Ovary (tissue), 10 donors: ENCODE measurements at regions of chr11 and their contacts with region 1.

Region 1: DNA sequence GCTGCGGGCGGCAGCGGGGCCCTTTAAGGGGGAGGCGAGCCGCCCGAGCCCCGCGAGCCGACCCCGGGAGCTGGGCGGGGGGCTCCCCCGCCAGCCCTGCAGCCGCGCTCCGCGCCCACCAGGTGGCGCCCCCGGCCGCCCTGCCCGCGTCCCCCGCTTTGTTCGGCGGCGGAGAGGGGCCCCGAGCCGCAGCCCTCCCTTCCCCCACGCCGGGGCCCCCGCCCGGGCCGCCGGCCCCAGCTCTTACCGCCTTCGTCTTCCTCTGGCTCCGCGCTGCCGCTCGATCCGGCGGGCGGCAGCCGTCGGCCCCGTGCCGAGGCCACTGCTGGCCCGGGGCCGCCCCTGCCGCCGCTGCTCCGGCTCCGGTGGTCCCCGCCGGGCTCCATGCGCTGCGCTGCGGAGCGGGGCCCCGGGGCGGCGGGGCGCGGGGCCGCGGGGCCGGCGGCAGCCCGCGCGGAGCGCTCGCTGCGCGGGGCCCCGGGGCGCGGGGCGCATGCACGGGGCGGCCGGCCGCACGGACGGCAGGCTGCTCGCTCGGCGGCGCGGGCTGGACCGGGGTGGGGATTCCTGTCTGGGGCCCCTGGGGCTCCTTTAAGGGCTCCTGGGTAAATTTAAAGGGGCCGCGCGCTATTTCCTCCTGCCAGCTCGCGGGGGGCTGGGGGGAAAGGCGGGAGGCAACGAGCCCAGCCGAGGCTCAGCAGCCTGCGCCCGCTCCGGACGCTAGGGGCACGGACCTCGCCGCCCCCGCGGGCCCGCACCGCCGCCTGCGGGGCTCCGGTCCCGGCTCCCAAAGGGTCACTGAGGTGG is at the start of gene ZFTA:
- DNase-seq: peak; percentile 67 to 86 (median 80)
- H3K4me3 ChIP-seq: peak within 1 kb of the TSS; percentile 78
- H3K27ac ChIP-seq: peak within 1 kb of the TSS; percentile 80 to 89
- H3K4me1 ChIP-seq: peaks cover 19% of the 10 kb centered on the region
- H3K27me3 ChIP-seq: no peaks in the 10 kb centered on the region
- CTCF ChIP-seq: peak in 2 of 3 donors; percentile 88 to 90
- EP300 ChIP-seq: no peak
- POLR2A ChIP-seq: no peak
- total RNA-seq, gene ZFTA: 22.6 to 64.4 (median 51.4) TPM

Region 2: GRCh38 chr11:62880803-62881578 is 887.4 kb before region 1 on chr11 and contains the start of gene SLC3A2:
- intact Hi-C with region 1: loop called in 1 of 4 experiments (anchors 10 kb)
- DNase-seq: peak; percentile 89 to 91 (median 90)
- H3K4me3 ChIP-seq: peak within 1 kb of the TSS; percentile 74
- H3K27ac ChIP-seq: peak within 1 kb of the TSS; percentile 96 to 99
- H3K4me1 ChIP-seq: peaks cover 14% of the 10 kb centered on the region
- H3K27me3 ChIP-seq: no peaks in the 10 kb centered on the region
- CTCF ChIP-seq: peak; percentile 50 to 75 (median 74)
- EP300 ChIP-seq: no peak
- POLR2A ChIP-seq: peak; percentile 99
- total RNA-seq, gene SLC3A2: 69.0 to 430 (median 97.7) TPM

Region 3: DNA sequence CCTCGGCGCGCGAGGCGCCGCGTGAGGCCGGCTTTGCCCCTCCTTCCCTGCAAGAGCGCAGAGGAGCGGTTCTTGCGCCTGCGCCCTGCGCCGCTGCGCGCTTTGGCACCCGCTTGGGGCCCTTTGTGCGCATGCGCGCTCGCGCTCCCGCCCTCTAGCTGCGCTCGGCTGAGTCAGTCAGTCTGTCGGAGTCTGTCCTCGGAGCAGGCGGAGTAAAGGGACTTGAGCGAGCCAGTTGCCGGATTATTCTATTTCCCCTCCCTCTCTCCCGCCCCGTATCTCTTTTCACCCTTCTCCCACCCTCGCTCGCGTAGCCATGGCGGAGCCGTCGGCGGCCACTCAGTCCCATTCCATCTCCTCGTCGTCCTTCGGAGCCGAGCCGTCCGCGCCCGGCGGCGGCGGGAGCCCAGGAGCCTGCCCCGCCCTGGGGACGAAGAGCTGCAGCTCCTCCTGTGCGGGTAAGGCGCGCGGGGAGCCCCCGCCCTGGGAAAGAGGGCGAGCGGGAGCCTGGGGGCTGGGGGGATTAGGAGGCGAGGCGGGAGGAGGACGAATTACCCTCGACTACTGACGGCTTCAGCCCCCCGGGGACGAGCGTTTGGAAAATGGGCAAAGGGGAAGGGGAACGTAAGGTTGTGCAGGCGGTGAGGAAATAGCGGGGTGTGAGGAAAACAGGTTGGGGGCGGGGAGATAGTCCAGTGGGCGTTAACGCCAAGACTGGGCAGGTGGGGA is 87.0 kb before region 1 on chr11 and contains the start of gene RTN3:
- intact Hi-C with region 1: loop called in 1 of 4 experiments (anchors 10 kb)
- DNase-seq: peak; percentile 95 to 99 (median 96)
- H3K4me3 ChIP-seq: peak within 1 kb of the TSS; percentile 97
- H3K27ac ChIP-seq: peak within 1 kb of the TSS; percentile 76 to 87
- H3K4me1 ChIP-seq: no peaks in the 10 kb centered on the region
- H3K27me3 ChIP-seq: no peaks in the 10 kb centered on the region
- CTCF ChIP-seq: peak in 2 of 3 donors; percentile 31 to 39
- EP300 ChIP-seq: no peak
- POLR2A ChIP-seq: peak; percentile 92
- total RNA-seq, gene RTN3: 53.2 to 82.9 (median 64.1) TPM

Region 4: DNA sequence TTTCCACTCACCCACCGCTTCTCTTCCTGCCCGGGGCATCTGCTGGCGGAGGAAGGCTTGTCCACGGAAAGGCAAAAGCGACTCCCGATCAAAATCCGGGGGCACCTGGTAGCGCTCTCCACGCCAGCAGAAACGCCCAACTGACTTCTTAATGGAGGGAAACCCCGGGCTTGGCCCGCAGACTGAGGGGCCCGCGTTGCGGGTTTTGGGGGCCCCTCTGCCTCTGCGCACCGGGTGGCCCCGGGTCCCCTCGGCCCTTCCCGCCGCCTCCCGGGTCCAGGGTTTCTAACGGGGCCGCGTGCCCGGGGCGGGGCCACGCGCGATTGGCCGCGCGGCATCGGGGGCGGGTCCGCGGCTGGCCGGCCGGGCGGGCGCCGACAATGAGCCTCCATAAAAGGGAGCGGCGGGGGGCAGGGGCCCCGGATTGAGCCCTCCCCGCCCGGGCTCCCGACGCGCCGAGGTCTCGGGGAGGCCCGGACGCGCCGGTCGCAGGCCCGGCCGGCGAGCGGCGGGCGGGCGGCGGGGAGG is 44.7 kb after region 1 on chr11 and contains the start of gene SPINDOC:
- intact Hi-C with region 1: loop called in 2 of 4 experiments (anchors 2 to 5 kb)
- DNase-seq: peak; percentile 72 to 85 (median 79)
- H3K4me3 ChIP-seq: peak within 1 kb of the TSS; percentile 90
- H3K27ac ChIP-seq: peak within 1 kb of the TSS; percentile 49 to 64
- H3K4me1 ChIP-seq: peaks cover 9% of the 10 kb centered on the region
- H3K27me3 ChIP-seq: no peaks in the 10 kb centered on the region
- CTCF ChIP-seq: no peak
- EP300 ChIP-seq: no peak
- POLR2A ChIP-seq: no peak
- total RNA-seq, gene SPINDOC: 10.2 to 22.7 (median 19.5) TPM

Region 5: DNA sequence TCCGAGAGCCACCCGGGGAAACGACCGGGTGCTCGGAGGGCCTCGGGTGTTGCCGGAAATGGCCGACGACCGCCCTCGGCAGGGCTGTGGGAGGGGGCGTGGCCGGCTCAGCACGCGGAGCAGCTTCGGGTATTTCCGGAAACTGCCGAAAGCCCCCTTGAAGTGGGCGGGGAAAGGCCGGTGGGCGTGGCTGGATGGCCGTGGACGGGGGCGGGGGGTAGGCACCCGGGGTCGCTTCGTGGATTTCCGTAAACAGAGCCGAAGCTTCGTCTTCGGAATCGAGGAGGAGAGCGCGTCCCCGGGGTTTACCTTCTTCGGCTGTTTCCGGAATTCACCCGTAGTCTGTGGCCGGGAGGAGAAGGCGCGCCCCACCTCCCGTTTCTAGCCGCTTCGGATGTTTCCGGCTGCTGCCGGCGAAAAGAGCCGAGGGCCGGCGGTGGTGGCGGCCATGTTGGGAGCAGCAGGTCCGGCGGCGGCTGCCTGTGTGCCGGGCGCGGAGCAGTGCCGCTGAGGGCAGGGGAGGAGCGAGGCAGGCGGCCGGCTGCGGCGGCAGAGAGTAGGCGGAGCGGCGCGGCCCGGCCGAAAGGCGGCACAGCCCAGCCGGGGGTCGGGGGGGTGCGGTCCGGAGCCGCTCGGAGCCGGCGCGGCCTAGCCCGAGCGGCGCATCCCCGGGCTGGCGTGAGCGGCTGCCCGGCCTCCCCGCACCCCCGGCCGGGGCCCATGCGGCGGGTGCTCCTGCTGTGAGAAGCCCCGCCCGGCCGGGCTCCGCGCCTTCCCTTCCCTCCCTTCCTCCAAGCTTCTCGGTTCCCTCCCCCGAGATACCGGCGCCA is 70.5 kb after region 1 on chr11 and contains the start of gene MARK2:
- intact Hi-C with region 1: loop called in 1 of 4 experiments (anchors 2 kb)
- DNase-seq: peak; percentile 99 to 100 (median 100)
- H3K4me3 ChIP-seq: peak within 1 kb of the TSS; percentile 80
- H3K27ac ChIP-seq: peak within 1 kb of the TSS; percentile 84 to 93
- H3K4me1 ChIP-seq: peaks cover 11% of the 10 kb centered on the region
- H3K27me3 ChIP-seq: no peaks in the 10 kb centered on the region
- CTCF ChIP-seq: peak in 1 of 3 donors; percentile 17
- EP300 ChIP-seq: no peak
- POLR2A ChIP-seq: peak; percentile 73
- total RNA-seq, gene MARK2: 13.5 to 27.8 (median 25.8) TPM

Region 6: DNA sequence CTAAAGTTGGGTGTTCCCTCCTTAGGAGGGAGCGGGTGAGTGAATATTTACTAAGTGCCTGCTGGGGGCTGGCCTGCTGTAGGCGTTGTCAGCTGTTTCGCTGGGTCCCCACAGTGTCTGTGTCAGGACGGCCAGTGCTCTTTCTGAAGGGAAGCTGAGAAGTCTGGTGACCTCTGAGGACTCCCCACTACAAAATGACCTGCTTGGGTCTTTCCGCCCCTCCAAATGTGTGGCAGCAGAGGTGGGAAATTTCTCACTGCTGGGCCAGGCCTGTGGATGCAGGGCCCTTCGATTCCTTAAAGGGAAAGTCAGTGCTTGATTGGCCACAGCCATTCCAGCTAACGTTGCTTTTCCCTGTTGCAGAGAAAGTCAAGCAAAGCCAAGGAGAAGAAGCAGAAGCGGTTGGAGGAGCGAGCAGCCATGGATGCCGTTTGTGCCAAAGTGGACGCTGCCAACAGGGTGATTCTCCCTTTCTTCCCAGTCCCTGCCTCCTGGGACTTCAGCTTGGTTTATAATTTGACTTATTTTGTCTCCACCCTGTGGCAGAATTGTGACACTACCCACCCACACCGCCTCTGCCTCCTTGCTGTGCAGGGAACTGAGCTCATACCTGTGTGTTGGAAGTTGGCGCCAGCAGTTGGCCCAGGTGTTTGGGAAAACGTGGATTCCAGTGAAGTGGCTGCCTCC is 177.2 kb after region 1 on chr11:
- intact Hi-C with region 1: loop called in 2 of 4 experiments (anchors 5 to 10 kb)
- DNase-seq: peak; percentile 75 to 79 (median 77)
- H3K4me3 ChIP-seq: no peak overlapping the region
- H3K27ac ChIP-seq: no peak overlapping the region
- H3K4me1 ChIP-seq: peaks cover 4% of the 10 kb centered on the region
- H3K27me3 ChIP-seq: no peaks in the 10 kb centered on the region
- CTCF ChIP-seq: peak; percentile 55 to 87 (median 81)
- EP300 ChIP-seq: no peak
- POLR2A ChIP-seq: no peak

Region 7: GRCh38 chr11:65506770-65507505 is 1738.5 kb after region 1 on chr11:
- intact Hi-C with region 1: no loop called
- DNase-seq: peak; percentile 64 to 78 (median 72)
- H3K4me3 ChIP-seq: peak overlapping the region; percentile 82
- H3K27ac ChIP-seq: peak overlapping the region; percentile 82 to 91
- H3K4me1 ChIP-seq: peaks cover 2% of the 10 kb centered on the region
- H3K27me3 ChIP-seq: no peaks in the 10 kb centered on the region
- CTCF ChIP-seq: no peak
- EP300 ChIP-seq: no peak
- POLR2A ChIP-seq: no peak